ENCODE measurements at regions of chr22 and their contacts with region 1.

Region 1: DNA sequence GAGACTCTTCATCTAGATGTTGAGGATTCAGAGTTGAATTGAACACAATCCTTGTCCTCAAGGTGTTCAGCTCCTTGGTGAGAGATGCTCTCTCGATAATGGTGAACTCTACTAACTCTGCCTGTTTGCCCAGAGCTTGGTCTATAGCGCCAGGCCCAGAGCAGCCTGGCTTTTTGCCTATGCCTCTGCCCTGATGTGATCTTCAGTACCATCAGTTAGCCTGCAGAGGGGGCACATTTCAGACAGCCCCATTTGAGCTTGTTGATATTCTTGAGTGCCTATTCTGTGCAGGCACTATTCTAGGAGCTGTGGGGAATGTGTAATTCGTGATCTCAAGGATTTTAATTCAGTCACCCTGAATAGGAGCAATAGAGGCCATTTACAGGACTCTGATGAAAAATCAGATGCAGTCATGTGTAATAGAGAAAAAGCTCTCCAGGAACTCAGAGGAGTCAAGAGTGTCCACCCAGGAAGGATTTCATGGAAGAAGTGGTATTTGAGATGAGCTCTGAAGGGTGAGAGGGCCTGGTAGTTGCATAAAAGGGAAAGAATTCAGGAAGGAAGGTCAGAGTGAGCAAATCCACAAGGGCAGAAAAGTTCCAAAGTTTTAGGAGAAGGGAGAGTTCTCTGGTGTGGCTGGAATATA is 19.3 kb downstream of the GTPBP1 start:
- DNase-seq: peak; percentile 56
- ATAC-seq: peak; percentile 73
- H3K4me3 Mint-ChIP-seq: no peak overlapping the region
- H3K27ac Mint-ChIP-seq: peak overlapping the region; percentile 28
- H3K4me1 Mint-ChIP-seq: no peaks in the 10 kb centered on the region
- H3K27me3 Mint-ChIP-seq: no peaks in the 10 kb centered on the region

Region 2: DNA sequence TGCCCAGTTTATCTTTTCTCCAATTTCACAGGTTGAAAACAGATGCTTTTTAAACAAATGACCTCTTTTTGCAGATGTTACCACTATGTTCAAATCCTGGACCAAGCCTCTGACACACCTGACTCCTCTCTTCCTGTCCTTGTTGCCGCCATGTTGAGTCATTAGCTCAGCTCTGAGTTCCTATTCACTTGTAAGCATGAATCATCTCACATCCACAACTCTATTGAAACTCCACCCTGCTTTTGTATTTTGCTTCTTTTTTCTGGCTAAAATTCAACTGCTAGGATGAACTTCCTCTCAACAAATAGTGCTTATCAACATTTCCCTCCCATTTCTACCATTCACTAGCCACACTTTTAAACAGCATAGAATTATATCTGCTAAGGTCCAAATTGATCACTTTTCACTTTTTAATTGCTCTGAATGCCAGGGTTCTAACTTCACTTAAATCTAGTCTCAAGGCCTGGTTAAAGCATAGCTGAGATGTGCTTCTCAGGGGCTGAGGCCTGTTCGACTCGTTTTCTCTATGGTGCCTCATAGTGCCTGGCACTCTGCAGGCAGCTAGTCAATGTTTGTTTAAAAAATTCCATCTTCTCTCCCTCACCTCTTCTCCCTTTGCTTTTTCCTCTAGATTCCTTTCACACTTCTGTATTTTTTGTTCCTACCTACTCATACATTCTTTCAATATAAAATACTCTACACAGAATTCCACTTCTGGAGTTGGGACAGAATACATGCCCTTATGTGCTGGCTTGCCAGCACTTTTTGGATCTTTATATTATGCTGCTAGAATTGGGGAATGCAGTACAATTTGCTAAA is 28.2 kb before region 1 on chr22:
- CTCF ChIA-PET with region 1: interaction called, 10 read pairs
- POLR2A ChIA-PET with region 1: no interaction called
- DNase-seq: peak; percentile 44
- ATAC-seq: no peak
- H3K4me3 Mint-ChIP-seq: peak overlapping the region; percentile 92
- H3K27ac Mint-ChIP-seq: peak overlapping the region; percentile 84
- H3K4me1 Mint-ChIP-seq: peaks cover 54% of the 10 kb centered on the region
- H3K27me3 Mint-ChIP-seq: no peaks in the 10 kb centered on the region

Region 3: GRCh38 chr22:38705235-38706100 is 19.6 kb before region 1 on chr22 and contains the start of gene GTPBP1:
- CTCF ChIA-PET with region 1: interaction called, 48 read pairs
- POLR2A ChIA-PET with region 1: no interaction called
- DNase-seq: peak; percentile 99
- ATAC-seq: peak; percentile 86
- H3K4me3 Mint-ChIP-seq: peak within 1 kb of the TSS; percentile 93
- H3K27ac Mint-ChIP-seq: peak within 1 kb of the TSS; percentile 96
- H3K4me1 Mint-ChIP-seq: peaks cover 47% of the 10 kb centered on the region
- H3K27me3 Mint-ChIP-seq: no peaks in the 10 kb centered on the region
- total RNA-seq, gene GTPBP1: 71.8 to 73.9 TPM

Region 4: DNA sequence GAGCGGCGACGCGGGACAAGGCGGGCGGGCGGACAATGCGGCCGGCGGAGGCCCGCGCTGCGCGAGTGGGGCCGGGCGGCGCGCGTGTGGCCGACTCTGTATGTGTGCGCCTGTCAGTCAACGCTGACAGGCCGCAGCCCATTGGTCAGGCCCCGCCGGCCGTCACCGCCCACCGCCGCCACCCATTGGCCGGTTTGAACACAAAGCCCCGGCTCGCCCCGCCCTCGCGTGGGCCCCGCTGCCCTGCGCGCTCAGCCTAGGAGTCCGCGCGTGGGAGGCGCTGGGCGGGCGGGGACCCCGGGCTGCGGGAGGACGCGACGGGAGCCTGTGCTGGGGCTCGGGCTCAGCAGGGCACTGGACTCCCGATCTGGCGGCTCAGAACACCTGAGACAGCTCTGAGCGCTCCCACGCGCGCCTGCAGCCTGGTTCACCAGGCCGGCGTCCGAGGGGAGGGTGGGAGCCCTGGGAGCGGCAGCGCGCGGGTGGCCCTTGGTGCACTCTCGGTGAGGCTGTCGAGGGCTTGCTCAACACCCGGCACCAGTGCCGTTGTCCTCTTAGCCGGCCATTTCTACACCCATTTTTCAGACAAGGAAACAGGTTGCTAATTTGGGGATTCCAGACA is 31.0 kb after region 1 on chr22 and contains the start of gene SUN2:
- CTCF ChIA-PET with region 1: interaction called, 16 read pairs
- POLR2A ChIA-PET with region 1: interaction called, 307 read pairs
- DNase-seq: peak; percentile 95
- ATAC-seq: peak; percentile 76
- H3K4me3 Mint-ChIP-seq: peak within 1 kb of the TSS; percentile 97
- H3K27ac Mint-ChIP-seq: peak within 1 kb of the TSS; percentile 95
- H3K4me1 Mint-ChIP-seq: peaks cover 52% of the 10 kb centered on the region
- H3K27me3 Mint-ChIP-seq: no peaks in the 10 kb centered on the region
- total RNA-seq, gene SUN2: 481 to 482 TPM

Region 5: DNA sequence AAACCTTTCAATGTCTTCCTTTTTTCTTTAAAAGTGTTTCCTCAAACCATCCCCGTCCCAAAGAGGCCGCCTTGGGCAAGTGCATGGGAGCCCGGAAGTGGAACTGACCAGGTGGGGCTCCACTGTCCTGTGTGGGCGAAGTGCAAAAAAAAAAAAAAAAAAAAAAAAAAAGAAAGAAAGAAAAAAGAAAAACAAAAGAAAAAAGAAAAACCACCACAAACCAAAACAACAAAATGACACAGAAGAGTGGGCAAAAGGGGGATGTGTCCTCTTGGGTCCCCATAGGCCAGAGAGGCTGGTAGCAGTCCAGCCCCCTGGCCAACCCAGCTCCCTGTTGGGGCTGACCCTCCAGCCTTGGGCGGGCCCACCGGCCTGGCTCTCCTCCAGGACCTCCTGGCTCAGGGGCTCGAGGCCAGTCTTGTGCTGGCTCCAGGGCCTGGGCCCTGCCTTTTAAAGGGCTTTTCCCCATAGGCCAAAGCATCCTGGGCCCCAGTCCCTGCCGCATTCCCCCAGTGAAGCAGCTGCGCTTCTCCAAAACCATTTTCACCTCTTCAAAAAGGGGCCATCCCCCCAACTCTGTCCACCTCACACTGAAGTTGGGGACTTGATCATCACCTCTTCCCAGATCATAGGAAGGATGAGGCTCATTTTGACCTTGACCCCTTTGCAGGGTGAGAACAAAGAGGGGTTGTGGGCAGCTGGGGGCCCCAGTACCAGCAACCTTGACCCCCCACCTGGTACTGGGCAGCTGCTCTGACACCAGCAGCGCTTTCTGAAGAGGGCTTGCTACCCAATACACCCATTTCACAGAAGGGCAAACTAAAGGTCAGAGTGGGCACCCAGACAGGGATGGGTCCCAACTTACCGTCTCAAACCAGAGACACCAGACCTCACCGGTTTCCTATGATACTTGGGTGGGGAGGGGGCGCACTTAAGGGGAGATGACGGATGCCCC is 137.6 kb after region 1 on chr22:
- CTCF ChIA-PET with region 1: no interaction called
- POLR2A ChIA-PET with region 1: no interaction called
- DNase-seq: no peak
- ATAC-seq: no peak
- H3K4me3 Mint-ChIP-seq: no peak overlapping the region
- H3K27ac Mint-ChIP-seq: no peak overlapping the region
- H3K4me1 Mint-ChIP-seq: no peaks in the 10 kb centered on the region
- H3K27me3 Mint-ChIP-seq: no peaks in the 10 kb centered on the region

Measured in activated CD8-positive, alpha-beta T cell treated with anti-CD3 and anti-CD28 coated beads, Interleukin-2, amount 10 ng/mL, durations not matched to agents 7 days and 5 days (primary cell).